ENCODE measurements at regions of chr15 and their contacts with region 1.

Region 1: GRCh38 chr15:91040856-91041255 is 18.5 kb upstream of the VPS33B start:
- DNase-seq: no peak
- ATAC-seq: no peak
- H3K4me3 ChIP-seq: no peak overlapping the region
- H3K27ac ChIP-seq: no peak overlapping the region
- H3K4me1 ChIP-seq: no peaks in the 10 kb centered on the region
- H3K27me3 ChIP-seq: no peaks in the 10 kb centered on the region
- CTCF ChIP-seq: no peak
- POLR2A ChIP-seq: no peak

Region 2: GRCh38 chr15:90942354-90943120 is 98.3 kb before region 1 on chr15:
- intact Hi-C with region 1: no loop called
- DNase-seq: no peak
- ATAC-seq: no peak
- H3K4me3 ChIP-seq: no peak overlapping the region
- H3K27ac ChIP-seq: no peak overlapping the region
- H3K4me1 ChIP-seq: no peaks in the 10 kb centered on the region
- H3K27me3 ChIP-seq: no peaks in the 10 kb centered on the region
- CTCF ChIP-seq: no peak
- POLR2A ChIP-seq: no peak

Region 3: DNA sequence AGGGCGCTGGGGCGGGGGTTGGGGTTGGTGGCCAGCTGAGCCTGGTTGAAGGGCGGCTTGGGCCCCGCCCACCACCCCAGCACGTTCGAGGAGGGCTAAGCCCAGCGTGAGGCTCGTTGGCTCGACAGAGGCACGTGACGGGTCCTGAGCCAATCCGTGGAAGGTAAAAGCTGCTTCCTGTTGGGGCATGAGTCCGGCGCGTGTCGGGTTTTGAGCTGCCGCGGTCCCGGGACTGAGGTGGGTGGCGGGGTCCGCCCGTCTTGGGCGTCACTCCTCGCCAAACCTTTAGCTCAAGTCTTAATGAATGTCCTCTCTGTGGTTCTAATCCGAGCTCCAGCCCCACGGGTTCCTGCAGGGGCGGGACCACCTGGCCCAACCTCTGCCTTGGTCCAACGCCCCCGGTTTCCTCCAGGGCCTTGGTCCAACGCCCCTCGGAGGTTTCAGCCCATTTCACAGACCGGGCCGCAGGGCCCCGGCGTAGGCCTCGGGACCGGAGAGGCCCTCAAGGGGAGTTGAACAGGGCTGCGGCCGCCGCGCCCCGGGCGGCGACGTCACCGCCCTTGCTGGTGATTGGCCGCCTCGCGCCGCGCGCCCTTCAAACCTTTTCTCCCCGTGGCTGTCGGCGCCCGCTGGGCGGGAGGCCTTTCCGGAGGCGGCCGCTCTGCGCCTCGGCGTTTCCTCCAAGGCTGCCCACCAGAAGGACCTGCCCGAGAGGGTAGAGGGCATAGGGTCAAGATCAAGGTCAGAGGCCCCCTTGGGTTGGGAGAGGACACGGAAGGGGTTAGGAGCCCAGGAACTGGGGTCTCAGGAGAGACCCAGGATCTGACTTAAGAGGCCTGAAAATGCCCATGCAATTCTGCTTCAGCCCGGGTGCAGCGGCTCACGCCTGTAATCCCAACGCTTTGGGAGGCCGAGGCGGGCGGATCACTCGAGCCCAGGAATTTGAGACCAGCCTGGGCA is 85.9 kb before region 1 on chr15 and contains the start of gene RCCD1:
- intact Hi-C with region 1: loop called (anchors 5 kb)
- DNase-seq: peak; percentile 94 to 97 (median 96)
- ATAC-seq: peak; percentile 92
- H3K4me3 ChIP-seq: peak within 1 kb of the TSS; percentile 39 to 60
- H3K27ac ChIP-seq: peak within 1 kb of the TSS; percentile 72 to 98 (median 92)
- H3K4me1 ChIP-seq: peaks cover 31% of the 10 kb centered on the region
- H3K27me3 ChIP-seq: no peaks in the 10 kb centered on the region
- CTCF ChIP-seq: no peak
- POLR2A ChIP-seq: peak; percentile 35 to 79 (median 79)
- total RNA-seq, gene RCCD1: 13.7 to 21.4 TPM